CD14-positive monocyte (primary cell): ENCODE measurements at regions of chr15 and their contacts with region 1.

Region 1: DNA sequence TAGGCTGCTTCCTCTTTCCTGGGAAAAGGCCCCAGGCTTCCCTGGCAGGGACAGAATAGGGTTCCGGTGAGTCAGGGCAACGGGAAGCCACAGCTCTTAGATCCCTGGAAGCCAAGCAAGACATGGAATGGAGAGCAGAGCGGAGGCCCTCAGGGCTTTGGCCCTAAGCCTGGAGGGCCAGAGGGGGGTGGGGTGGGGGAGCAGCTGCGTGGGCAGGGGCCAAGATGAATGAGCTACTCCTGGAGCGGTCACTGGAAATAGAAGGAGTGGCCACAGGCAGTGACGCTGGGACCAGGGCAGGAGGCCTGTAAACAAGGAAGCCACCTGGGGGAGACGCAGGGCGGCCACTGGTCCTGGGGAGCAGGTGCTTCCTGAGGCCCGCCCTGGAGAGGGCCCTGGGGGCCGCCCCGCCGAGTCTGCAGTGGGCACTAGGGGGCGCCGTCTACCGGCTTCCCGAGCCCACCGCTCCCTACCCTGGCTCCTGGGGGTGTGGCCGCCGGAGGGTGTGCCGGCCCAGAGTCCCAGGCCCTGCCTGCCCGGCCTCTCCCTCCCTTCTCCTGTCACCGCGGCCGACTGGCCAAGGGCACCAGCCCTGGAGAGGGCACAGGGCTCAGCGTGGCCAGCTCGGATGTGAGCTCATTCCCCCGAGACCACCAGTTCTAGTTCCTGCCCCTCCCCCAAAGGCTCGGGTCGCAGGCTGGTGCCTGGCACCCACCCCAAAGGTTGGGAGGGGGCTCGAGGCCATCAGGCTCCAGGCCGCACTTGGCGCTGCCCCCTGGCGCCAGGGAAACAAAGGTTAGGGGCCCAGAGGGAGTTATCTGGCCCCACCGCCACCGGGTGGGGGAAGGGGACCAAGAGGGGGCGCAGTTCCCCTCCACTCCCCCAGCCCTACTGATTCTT is 12.1 kb downstream of the VPS18 start:
- DNase-seq: peak; percentile 47 to 60 (median 49)
- H3K4me3 ChIP-seq: peak overlapping the region; percentile 47 to 76 (median 48)
- H3K4me3 Mint-ChIP-seq: peak overlapping the region; percentile 67 to 84
- H3K27ac ChIP-seq: peak overlapping the region; percentile 56 to 57
- H3K27ac Mint-ChIP-seq: peak overlapping the region in 5 of 7 donors; percentile 30 to 79 (median 61)
- H3K4me1 ChIP-seq: peaks cover 85 to 96% of the 10 kb centered on the region in 2 donors
- H3K4me1 Mint-ChIP-seq: peaks cover 91% of the 10 kb centered on the region
- H3K27me3 ChIP-seq: no peaks in the 10 kb centered on the region
- H3K27me3 Mint-ChIP-seq: peaks cover 0 to 7% (median 0%) of the 10 kb centered on the region in 3 donors
- CTCF ChIP-seq: peak; percentile 91

Region 2: DNA sequence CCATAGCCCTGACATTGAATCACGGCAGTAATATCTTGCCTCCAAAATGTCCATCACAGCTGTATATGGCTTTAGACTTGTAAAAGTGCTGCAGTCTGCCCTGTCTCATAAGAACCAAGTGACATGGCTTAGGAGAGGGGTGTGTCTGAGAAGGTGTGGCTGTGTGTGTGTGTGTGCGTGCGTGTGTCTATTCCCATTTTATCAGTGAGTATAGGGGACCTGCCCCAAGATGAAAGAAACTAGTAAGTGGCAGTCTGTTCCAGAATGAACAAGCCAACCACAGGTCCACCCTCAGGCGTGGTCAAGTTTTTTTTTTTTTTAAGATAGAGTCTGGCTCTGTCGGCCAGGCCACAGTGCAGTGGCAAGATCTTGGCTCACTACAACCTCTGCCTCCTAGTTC is 26.7 kb before region 1 on chr15:
- intact Hi-C with region 1: no loop called
- DNase-seq: no peak
- H3K4me3 ChIP-seq: no peak overlapping the region
- H3K4me3 Mint-ChIP-seq: no peak overlapping the region
- H3K27ac ChIP-seq: no peak overlapping the region
- H3K27ac Mint-ChIP-seq: no peak overlapping the region
- H3K4me1 ChIP-seq: no peaks in the 10 kb centered on the region
- H3K4me1 Mint-ChIP-seq: no peaks in the 10 kb centered on the region
- H3K27me3 ChIP-seq: peaks cover 2 to 5% of the 10 kb centered on the region in 2 donors
- H3K27me3 Mint-ChIP-seq: peaks cover 6 to 12% (median 9%) of the 10 kb centered on the region in 3 donors
- CTCF ChIP-seq: no peak

Region 3: DNA sequence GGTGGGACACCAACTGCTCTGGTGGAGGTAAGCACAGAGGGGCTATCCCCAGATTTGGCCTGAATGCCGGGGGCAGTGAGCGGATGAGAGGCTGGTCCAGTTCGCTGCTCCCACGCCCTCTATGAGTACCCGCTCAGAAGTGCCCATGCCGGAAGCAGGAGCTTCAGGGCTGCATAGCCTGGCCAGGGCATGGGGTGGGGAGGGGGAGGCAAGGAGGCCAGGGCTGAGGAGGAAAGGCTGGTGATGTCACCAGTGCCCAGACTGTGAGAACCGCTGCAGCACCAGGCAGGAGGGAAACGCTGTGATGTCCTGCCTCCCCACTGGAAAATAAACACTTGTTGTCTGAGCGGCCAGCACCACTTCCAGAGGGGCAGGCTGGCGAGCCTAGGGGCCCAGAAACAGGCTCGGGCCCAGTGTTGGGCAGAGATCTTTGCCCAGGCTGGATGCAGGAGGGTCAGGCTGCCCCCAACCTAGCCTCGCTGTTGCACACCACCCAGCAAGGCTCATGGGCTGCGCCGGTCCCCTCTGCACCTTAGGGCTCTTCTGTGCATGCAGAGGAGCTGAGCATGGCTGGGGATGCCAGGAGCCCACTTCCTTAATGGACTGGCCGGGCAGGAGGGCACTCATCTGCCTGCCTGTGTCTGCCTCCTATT is 11.9 kb after region 1 on chr15:
- intact Hi-C with region 1: no loop called
- DNase-seq: no peak
- H3K4me3 ChIP-seq: no peak overlapping the region
- H3K4me3 Mint-ChIP-seq: no peak overlapping the region
- H3K27ac ChIP-seq: no peak overlapping the region
- H3K27ac Mint-ChIP-seq: no peak overlapping the region
- H3K4me1 ChIP-seq: no peaks in the 10 kb centered on the region
- H3K4me1 Mint-ChIP-seq: no peaks in the 10 kb centered on the region
- H3K27me3 ChIP-seq: peaks cover 0 to 6% of the 10 kb centered on the region in 2 donors
- H3K27me3 Mint-ChIP-seq: peaks cover 3 to 14% (median 12%) of the 10 kb centered on the region in 3 donors
- CTCF ChIP-seq: no peak

Region 4: GRCh38 chr15:40928821-40929659 is 22.7 kb after region 1 on chr15 and contains the start of gene DLL4:
- intact Hi-C with region 1: loop called in 1 of 2 experiments (anchors 2 kb)
- DNase-seq: peak in 1 of 3 donors; percentile 23
- H3K4me3 ChIP-seq: peak within 1 kb of the TSS in 2 of 3 experiments; percentile 0 to 66
- H3K4me3 Mint-ChIP-seq: peak within 1 kb of the TSS; percentile 72 to 93
- H3K27ac ChIP-seq: no peak within 1 kb of the TSS
- H3K27ac Mint-ChIP-seq: peak within 1 kb of the TSS in 2 of 7 donors; percentile 35 to 42
- H3K4me1 ChIP-seq: peaks cover 53 to 69% of the 10 kb centered on the region in 2 donors
- H3K4me1 Mint-ChIP-seq: peaks cover 58% of the 10 kb centered on the region
- H3K27me3 ChIP-seq: peaks cover 56 to 91% of the 10 kb centered on the region in 2 donors
- H3K27me3 Mint-ChIP-seq: peaks cover 85 to 92% (median 85%) of the 10 kb centered on the region in 3 donors
- CTCF ChIP-seq: no peak
- polyA plus RNA-seq, gene DLL4: 0.07 TPM in 1 of 3 donors, not detected in the others

Region 5: DNA sequence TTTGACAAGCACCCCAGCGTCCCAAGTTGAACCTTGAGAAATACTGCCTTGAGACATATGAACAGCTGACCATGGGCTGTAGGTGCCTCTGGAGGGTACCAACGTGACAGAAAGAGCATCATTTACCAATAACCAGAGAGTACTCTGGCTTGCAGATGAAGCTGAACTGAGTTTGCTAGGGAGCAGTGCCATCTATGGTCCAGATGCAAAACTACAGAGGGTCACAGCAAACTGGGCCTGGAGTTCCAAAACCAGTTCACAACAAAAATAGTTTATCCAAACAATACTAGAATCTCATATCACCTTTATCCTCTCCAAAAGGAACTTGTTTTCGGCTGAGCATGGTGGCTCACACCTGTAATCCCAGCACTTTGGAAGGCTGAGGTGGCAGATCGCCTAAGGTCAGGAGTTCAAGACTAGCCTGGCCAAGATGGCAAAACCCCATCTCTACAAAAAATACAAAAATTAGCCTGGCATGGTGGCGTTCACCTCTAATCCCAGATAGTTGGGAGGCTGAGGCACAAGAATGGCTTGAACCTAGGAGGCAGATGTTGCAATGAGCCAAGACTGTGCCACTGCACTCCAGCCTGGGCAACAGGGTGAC is 116.2 kb after region 1 on chr15:
- intact Hi-C with region 1: loop called (anchors 2 to 5 kb)
- DNase-seq: peak; percentile 23 to 45 (median 28)
- H3K4me3 ChIP-seq: no peak overlapping the region
- H3K4me3 Mint-ChIP-seq: no peak overlapping the region
- H3K27ac ChIP-seq: no peak overlapping the region
- H3K27ac Mint-ChIP-seq: peak overlapping the region in 2 of 7 donors; percentile 13 to 52
- H3K4me1 ChIP-seq: peaks cover 5 to 13% of the 10 kb centered on the region in 2 donors
- H3K4me1 Mint-ChIP-seq: peaks cover 12% of the 10 kb centered on the region
- H3K27me3 ChIP-seq: no peaks in the 10 kb centered on the region
- H3K27me3 Mint-ChIP-seq: peaks cover 0 to 1% (median 0%) of the 10 kb centered on the region in 3 donors
- CTCF ChIP-seq: peak; percentile 74

Region 6: DNA sequence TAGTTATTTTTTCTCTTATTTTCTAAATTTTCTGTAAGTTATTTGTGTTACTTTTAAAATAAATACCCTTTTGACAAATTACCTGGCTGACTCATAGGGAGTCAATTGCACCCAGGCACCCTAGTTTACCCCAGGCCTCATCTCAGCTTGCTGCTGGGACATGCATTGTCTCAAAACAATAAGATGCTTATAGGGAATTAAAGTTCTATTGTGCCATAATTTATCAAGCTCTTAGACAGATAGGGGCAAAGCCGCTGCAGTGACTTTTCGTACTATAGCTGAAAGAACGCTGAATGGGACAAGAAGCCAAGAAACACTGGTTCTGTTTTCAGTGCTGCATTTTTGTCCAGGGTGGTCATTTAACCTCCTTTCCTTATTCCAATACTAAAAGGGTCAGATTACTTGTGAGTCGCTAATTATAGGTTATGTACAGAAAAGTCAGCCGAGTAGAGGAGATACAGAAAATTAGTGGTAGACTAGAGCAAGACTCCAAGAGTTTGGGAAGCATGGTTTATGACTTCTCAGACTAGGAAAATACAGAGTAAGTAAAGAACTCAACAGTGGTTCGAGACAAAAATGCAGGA is 274.0 kb after region 1 on chr15:
- intact Hi-C with region 1: loop called (anchors 5 to 10 kb)
- DNase-seq: no peak
- H3K4me3 ChIP-seq: no peak overlapping the region
- H3K4me3 Mint-ChIP-seq: no peak overlapping the region
- H3K27ac ChIP-seq: no peak overlapping the region
- H3K27ac Mint-ChIP-seq: no peak overlapping the region
- H3K4me1 ChIP-seq: peaks cover 4 to 5% of the 10 kb centered on the region in 2 donors
- H3K4me1 Mint-ChIP-seq: peaks cover 7% of the 10 kb centered on the region
- H3K27me3 ChIP-seq: no peaks in the 10 kb centered on the region
- H3K27me3 Mint-ChIP-seq: peaks cover 2 to 6% (median 5%) of the 10 kb centered on the region in 3 donors
- CTCF ChIP-seq: no peak

Region 7: DNA sequence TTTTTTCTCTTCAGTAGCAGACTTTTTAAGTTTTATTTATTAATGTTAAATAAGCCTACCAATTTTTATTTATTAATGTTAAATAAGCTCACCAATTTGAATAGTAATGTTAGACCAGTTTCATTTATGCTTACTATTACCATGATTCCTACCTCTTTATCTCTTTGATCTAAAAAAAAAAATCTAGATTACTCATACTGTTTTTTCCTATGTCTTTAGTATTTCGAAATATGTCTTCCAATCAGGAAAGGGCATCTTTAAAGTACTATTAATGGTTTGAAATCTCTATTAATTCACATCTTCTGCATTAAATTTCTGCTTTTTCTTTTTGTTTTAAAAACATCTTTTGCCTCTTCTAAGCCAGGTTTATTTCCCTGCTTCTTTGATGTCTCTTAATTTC is 840.5 kb after region 1 on chr15:
- intact Hi-C with region 1: no loop called
- DNase-seq: no peak
- H3K4me3 ChIP-seq: no peak overlapping the region
- H3K4me3 Mint-ChIP-seq: no peak overlapping the region
- H3K27ac ChIP-seq: no peak overlapping the region
- H3K27ac Mint-ChIP-seq: no peak overlapping the region
- H3K4me1 ChIP-seq: no peaks in the 10 kb centered on the region
- H3K4me1 Mint-ChIP-seq: no peaks in the 10 kb centered on the region
- H3K27me3 ChIP-seq: no peaks in the 10 kb centered on the region
- H3K27me3 Mint-ChIP-seq: no peaks in the 10 kb centered on the region
- CTCF ChIP-seq: no peak